Prostate gland (tissue), 2 donors: ENCODE measurements at regions of chr20 and their contacts with region 1.

Region 1: GRCh38 chr20:5749952-5750779 is at the start of gene SHLD1:
- DNase-seq: peak; percentile 78
- H3K4me3 ChIP-seq: peak within 1 kb of the TSS; percentile 53 to 55
- H3K27ac ChIP-seq: peak within 1 kb of the TSS; percentile 91 to 92
- H3K4me1 ChIP-seq: no peaks in the 10 kb centered on the region
- H3K27me3 ChIP-seq: no peaks in the 10 kb centered on the region
- CTCF ChIP-seq: no peak
- POLR2A ChIP-seq: no peak
- total RNA-seq, gene SHLD1: 6.4 to 10.5 TPM

Region 2: GRCh38 chr20:5657190-5657875 is 92.8 kb before region 1 on chr20:
- intact Hi-C with region 1: loop called (anchors 2 kb)
- DNase-seq: peak; percentile 40
- H3K4me3 ChIP-seq: no peak overlapping the region
- H3K27ac ChIP-seq: peak overlapping the region; percentile 42 to 49
- H3K4me1 ChIP-seq: no peaks in the 10 kb centered on the region
- H3K27me3 ChIP-seq: no peaks in the 10 kb centered on the region
- CTCF ChIP-seq: no peak
- POLR2A ChIP-seq: no peak